ENCODE measurements at regions of chr12 and their contacts with region 1.

Region 1: DNA sequence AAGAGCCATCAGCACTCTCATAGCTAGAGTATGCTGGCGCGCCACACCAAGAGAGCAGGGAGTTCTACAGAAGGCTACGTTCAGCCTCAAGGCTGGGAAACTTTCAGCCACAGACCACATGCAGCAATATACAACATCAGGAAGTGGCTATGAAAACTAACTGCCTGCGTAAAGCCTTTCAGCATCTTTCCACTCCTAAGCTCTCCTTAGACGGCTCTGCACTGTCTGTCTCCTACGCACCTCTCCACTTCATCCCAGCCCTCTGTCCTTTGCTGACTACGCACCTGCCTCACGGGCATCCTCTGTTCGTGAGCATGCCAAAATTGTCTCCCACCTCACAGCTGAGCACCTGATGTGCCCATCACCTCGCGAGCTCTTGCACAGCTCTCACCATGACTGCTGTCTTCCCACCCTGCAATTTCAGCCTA is 9.7 kb downstream of the MPHOSPH9 start:
- DNase-seq: peak in 9 of 42 donors; percentile 8 to 72 (median 47)

Region 2: GRCh38 chr12:122526683-122527477 is 696.4 kb before region 1 on chr12 and contains the starts of genes KNTC1 and RSRC2:
- intact Hi-C with region 1: no loop called
- DNase-seq: peak; percentile 93 to 100 (median 98)

Region 3: DNA sequence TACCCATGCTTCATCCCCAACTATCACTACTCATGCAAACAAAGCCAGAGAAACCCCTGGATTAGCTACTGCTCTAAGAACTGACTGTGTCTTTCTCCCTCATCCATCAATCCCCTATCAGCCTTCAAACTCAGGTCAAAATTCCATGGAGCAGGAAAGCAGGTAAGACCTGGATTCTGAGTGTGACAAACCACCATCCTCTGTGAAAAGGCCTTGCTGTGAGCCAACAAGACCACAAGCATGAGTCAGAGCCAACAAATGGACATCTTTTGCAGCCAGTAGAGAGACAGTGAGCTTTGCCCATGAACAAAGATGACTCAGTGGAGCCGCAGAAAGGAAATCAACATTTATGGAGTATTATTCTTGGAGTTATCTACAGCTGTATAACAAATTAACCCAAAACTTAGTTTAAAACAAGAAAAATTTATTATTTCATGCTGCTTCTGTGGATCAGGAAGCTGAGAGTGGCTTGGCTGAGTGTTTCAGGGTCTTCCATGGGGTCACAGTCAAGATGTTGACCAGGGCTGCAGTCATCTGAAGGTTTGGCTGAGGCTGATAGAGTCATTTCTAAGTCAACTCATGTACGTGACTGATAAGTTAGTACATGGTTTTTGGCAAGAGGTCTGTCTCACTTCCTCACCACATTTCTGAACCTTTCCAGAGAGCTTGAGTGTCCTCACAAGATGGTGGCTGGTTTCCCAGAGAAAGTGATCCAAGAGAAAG is 133.5 kb before region 1 on chr12:
- intact Hi-C with region 1: no loop called
- DNase-seq: no peak

Region 4: DNA sequence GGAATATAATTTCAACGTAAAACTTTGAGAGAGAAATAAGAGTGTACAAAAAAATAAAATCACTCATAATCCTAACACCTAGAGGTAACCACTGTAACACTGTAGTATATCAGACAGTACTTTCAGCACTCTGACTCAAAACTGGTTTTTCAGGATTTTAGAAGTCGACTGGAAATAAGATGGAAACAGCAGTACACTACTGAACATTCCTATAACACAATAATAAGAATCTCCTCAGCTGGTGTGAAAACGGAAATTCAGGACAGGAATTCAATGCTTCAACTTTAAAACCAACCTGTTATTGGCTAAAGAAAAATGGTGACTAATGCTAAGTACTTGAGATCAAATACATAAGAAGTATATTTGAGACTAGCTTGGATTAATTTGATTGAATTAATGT is 60.0 kb before region 1 on chr12:
- intact Hi-C with region 1: loop called (anchors 10 kb)
- DNase-seq: no peak

Region 5: GRCh38 chr12:123200414-123200813 is 22.8 kb before region 1 on chr12:
- intact Hi-C with region 1: no loop called
- DNase-seq: no peak

Measured in head of caudate nucleus (tissue), 42 donors.